IMR-90 (cell line): ENCODE measurements at regions of chr4 and their contacts with region 1.

Region 1: DNA sequence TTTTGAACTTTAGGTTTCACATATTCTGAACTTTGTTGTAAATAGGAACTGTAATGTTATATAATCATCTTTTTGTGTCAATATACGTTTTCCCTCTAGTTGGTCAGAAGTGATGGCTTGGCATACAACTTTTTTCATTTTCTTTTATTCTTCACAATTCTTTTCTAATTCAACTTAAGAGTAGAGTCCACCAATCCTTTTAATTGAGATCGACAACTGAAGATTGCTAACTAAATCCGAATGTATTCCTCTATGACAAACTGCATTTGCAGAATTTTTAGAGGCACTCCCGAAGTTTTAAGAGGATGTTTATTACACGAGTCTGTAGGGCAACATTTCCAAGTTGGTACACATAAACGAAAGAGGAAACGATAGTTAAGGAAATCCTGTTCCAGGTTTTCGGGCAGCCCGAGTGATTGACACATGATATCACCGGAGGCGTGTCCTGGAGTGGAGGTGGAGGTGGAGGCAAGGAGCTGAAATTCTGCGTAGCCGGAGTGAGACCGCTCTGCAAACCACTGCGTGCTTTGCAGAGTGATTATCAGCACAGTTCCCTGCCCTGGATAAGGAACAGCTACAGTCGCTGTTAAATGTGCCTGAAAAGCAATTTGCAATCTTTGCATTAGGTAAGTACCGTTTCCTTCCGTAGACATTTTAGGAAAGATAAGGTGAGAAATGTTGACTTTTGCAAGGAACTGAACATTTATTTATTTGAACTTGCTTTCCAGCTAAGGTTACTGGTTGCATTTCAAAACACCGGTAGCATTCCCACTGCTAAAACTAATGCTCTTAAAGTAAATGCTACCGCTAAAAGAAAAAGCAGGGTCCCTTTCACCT is at the start of gene SPRY1:
- DNase-seq: peak; percentile 88
- ATAC-seq: peak; percentile 45
- H3K4me3 ChIP-seq: peak within 1 kb of the TSS; percentile 60
- H3K27ac ChIP-seq: peak within 1 kb of the TSS; percentile 95
- H3K4me1 ChIP-seq: no peaks in the 10 kb centered on the region
- H3K27me3 ChIP-seq: no peaks in the 10 kb centered on the region
- CTCF ChIP-seq: no peak
- POLR2A ChIP-seq: no peak
- RAD21 ChIP-seq: no peak; the same call in 1 of the 2 replicates
- total RNA-seq, gene SPRY1: 1.4 and 1.9 TPM in 2 replicates

Region 2: DNA sequence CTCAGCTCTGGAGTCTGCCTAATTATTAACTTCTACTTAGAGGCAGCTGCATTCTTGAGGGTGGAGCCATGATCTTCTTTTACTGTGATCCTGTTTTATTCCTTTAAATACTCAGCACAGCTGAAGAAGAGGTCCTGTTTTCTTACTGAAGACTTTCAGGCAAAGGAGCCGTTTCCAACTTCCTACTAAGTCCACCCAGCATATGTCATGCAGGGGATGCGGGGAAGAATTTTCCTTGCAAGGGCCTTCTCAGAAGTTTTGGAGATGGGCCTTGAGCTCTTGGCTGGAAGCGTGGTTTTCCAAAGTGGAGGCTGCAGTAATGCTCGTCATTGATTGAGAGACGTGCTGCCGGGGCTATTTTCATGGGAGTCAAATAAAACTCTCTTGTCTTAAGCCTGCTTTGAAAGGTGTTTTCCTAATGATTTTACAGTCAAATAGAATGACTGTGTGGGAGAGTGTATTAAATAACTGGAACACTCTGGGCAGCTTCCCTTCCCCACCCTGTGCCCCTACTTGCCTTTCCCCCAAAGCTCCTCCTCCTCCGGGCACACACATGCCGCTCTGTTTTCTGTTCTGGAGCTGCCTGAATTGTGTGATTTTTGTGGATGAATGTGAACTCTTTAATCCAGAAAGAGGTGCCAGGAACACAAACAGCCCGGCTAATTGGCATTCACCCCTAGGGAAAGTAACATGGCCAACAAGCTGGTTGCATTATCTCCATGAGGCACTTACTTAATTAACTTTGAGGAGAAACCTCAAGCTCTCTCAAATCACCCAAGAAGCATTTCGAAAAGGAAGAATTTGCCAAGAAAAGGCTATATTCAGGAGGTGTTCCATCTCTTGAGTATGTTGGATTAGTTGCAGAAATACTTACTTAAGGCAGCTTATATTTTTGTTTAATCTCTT is 541.8 kb before region 1 on chr4:
- CTCF ChIA-PET with region 1: no interaction called
- POLR2A ChIA-PET with region 1: no interaction called
- dilution Hi-C with region 1: no loop called
- in situ Hi-C with region 1: no loop called
- intact Hi-C with region 1: no loop called
- DNase-seq: no peak
- ATAC-seq: peak; percentile 44; the same call in 1 of the 2 replicates
- H3K4me3 ChIP-seq: no peak overlapping the region
- H3K27ac ChIP-seq: no peak overlapping the region
- H3K4me1 ChIP-seq: peaks cover 10% of the 10 kb centered on the region
- H3K27me3 ChIP-seq: no peaks in the 10 kb centered on the region
- CTCF ChIP-seq: no peak
- POLR2A ChIP-seq: no peak
- RAD21 ChIP-seq: no peak

Region 3: GRCh38 chr4:123127218-123127617 is 269.3 kb before region 1 on chr4:
- CTCF ChIA-PET with region 1: interaction called, 5 read pairs
- POLR2A ChIA-PET with region 1: no interaction called
- dilution Hi-C with region 1: no loop called
- in situ Hi-C with region 1: no loop called
- intact Hi-C with region 1: loop called (anchors 1 kb)
- DNase-seq: peak; percentile 42
- ATAC-seq: peak; percentile 83
- H3K4me3 ChIP-seq: no peak overlapping the region
- H3K27ac ChIP-seq: no peak overlapping the region
- H3K4me1 ChIP-seq: no peaks in the 10 kb centered on the region
- H3K27me3 ChIP-seq: no peaks in the 10 kb centered on the region
- CTCF ChIP-seq: peak; percentile 56
- POLR2A ChIP-seq: no peak
- RAD21 ChIP-seq: peak; percentile 61

Region 4: DNA sequence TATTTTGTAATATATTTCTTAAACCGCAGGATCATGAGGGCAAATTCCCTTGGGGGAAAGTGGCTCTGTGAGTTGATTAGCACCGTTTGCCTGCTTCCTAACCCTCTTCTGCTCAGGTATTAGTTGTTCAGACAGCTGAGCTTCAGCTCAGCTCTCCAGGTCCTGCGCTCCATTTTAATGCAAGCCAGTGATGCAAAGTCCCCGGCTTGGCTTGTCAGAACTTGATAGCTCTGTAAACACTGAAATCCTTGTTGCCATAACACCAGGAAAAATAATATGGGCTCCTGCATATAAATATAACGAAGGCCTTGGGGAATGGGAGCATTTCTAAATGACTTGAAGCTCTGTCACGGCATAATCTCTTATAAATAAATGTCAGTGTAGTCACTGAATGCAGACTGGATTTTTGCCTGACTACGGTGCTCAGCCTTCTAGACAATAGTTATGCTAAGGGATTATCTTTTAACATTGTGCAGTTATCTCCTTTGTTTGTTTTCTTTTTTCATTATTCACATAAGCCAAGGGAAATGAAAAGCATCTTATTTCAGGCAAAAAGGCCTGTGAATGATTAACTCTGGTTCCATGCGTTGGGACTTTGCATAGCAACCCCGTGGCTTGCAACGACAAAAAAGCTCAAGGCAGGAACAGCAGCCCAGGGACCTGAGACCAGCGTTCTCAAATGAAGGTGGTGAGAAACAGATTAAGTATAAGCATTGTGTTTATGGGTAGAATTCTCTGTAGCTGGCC is 253.3 kb after region 1 on chr4:
- CTCF ChIA-PET with region 1: no interaction called
- POLR2A ChIA-PET with region 1: no interaction called
- dilution Hi-C with region 1: no loop called
- in situ Hi-C with region 1: loop called (anchors 5 kb)
- intact Hi-C with region 1: no loop called
- DNase-seq: peak; percentile 79
- ATAC-seq: peak; percentile 81
- H3K4me3 ChIP-seq: no peak overlapping the region
- H3K27ac ChIP-seq: peak overlapping the region; percentile 85; the same call in 1 of the 2 replicates
- H3K4me1 ChIP-seq: peaks cover 6% of the 10 kb centered on the region
- H3K27me3 ChIP-seq: no peaks in the 10 kb centered on the region
- CTCF ChIP-seq: no peak
- POLR2A ChIP-seq: no peak
- RAD21 ChIP-seq: no peak

Region 5: GRCh38 chr4:123832173-123833026 is 435.9 kb after region 1 on chr4:
- CTCF ChIA-PET with region 1: interaction called, 4 read pairs
- POLR2A ChIA-PET with region 1: no interaction called
- dilution Hi-C with region 1: no loop called
- in situ Hi-C with region 1: no loop called
- intact Hi-C with region 1: loop called (anchors 1 kb)
- DNase-seq: peak; percentile 100
- ATAC-seq: peak; percentile 84
- H3K4me3 ChIP-seq: no peak overlapping the region
- H3K27ac ChIP-seq: peak overlapping the region; percentile 83
- H3K4me1 ChIP-seq: peaks cover 14% of the 10 kb centered on the region
- H3K27me3 ChIP-seq: no peaks in the 10 kb centered on the region
- CTCF ChIP-seq: no peak
- POLR2A ChIP-seq: no peak
- RAD21 ChIP-seq: no peak

Region 6: DNA sequence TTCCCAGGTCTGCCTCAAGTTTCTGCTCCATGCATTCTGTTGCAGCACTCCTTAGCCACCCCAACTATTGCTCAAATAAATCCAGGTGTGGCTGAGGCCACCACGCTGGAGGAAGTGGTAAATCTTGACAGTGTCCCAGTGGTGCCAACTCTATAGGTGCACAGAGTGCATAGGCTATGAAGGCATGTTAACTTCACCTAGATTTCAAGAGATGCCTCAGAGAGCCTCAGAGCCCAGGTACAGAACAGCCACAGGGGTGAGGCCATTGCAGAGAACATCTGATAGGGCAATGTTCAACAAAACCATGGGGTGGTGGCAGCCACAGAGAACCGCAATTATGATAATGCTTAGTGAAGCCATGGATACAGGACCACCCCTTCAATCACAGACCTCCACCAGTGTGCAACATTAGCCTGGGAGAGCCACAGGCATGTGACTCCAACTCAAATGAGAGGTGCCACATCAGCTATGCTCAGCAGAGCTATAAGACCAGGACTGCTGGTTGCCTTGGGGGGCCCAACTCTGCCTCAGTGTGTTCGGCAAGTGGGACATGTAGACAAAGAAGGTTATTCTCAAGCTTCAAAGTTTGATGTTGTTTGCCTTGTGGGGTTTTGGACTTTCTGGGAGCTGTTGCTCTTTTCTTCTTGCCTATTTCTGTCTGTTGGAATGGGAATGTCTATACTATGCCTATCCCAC is 847.3 kb after region 1 on chr4:
- CTCF ChIA-PET with region 1: no interaction called
- POLR2A ChIA-PET with region 1: no interaction called
- dilution Hi-C with region 1: no loop called
- in situ Hi-C with region 1: loop called (anchors 10 kb)
- intact Hi-C with region 1: no loop called
- DNase-seq: no peak
- ATAC-seq: no peak
- H3K4me3 ChIP-seq: no peak overlapping the region
- H3K27ac ChIP-seq: no peak overlapping the region
- H3K4me1 ChIP-seq: no peaks in the 10 kb centered on the region
- H3K27me3 ChIP-seq: no peaks in the 10 kb centered on the region
- CTCF ChIP-seq: no peak
- POLR2A ChIP-seq: no peak
- RAD21 ChIP-seq: no peak